ENCODE measurements at regions of chr20 and their contacts with region 1.

Region 1: DNA sequence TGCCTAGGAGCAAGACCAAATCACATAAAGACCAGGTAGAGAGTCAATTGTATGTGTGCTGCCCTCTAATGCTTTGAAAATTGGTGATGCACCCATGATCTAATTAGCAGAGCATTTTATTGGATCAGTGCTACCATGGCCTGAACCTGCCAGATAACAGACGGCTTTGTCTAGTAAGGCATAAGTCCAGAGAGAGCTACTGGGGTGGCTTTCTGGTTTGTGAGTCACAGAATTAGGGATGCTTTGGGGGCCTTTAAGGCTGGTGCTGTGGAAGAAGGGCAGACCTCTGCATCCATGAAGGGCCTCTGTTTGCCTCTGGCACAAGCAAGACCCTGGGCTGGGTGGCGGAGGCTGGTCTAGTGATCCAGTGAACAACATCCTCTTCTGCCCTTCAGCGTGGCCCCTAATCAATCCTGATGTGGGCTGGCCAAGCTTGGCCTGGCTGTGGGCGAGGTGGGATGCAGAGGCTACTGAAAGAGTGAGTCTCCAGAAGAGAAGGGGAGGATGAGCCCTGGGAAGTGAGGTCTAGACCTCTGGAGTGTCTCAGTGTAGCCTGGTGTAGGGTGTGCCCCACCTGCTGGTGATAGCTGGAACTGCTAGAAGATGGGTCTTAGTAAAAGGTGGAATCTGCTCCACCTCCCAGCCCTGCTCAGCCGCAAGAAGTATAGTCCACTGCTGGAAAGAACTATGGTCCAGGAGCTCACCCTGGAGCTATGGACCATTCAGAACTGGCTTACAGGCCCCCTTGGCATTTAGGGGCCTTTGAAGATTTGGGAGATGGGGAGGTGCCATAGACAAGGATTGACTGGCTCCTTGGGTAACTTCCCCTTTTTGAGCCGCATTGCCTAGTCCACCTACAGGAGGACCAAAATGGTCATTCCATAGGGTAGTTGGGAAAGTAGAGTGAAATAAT is 36.7 kb upstream of the AAR2 start:
- DNase-seq: peak; percentile 83
- ATAC-seq: peak; percentile 90
- H3K4me3 ChIP-seq: no peak overlapping the region
- H3K27ac ChIP-seq: no peak overlapping the region
- H3K4me1 ChIP-seq: no peaks in the 10 kb centered on the region
- H3K27me3 ChIP-seq: no peaks in the 10 kb centered on the region
- CTCF ChIP-seq: peak; percentile 99
- EP300 ChIP-seq: no peak
- POLR2A ChIP-seq: no peak
- RAD21 ChIP-seq: peak; percentile 98

Region 2: DNA sequence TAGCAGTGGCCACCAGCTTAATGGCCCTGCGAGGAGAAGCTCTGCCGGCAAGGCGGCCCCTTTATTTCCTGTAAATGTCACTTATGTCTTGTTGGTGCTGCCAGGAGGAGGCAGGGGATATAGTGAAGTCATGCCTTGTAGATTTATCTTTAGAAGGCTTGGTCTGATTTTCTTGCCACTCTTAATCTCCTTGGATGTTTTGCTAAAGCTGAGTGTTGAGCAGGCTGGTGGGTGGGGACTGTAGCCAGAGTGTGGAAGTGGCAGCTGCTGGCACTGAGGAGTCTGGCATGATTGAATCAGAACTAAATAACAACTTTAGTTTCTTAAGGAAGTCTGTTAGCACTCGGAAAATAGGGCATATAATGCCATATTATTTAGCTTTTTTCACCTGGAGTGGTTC is 349.9 kb before region 1 on chr20:
- CTCF ChIA-PET with region 1: no interaction called
- POLR2A ChIA-PET with region 1: no interaction called
- in situ Hi-C with region 1: no loop called
- intact Hi-C with region 1: no loop called
- DNase-seq: no peak
- ATAC-seq: no peak
- H3K4me3 ChIP-seq: no peak overlapping the region
- H3K27ac ChIP-seq: no peak overlapping the region
- H3K4me1 ChIP-seq: peaks cover 6% of the 10 kb centered on the region
- H3K27me3 ChIP-seq: no peaks in the 10 kb centered on the region
- CTCF ChIP-seq: no peak
- EP300 ChIP-seq: no peak
- POLR2A ChIP-seq: no peak
- RAD21 ChIP-seq: no peak

Region 3: GRCh38 chr20:36153736-36154699 is 45.6 kb before region 1 on chr20:
- CTCF ChIA-PET with region 1: interaction called, 83 read pairs
- POLR2A ChIA-PET with region 1: interaction called, 4 read pairs
- in situ Hi-C with region 1: loop called (anchors 5 kb)
- intact Hi-C with region 1: loop called (anchors 1 kb)
- DNase-seq: peak; percentile 74
- ATAC-seq: peak; percentile 79
- H3K4me3 ChIP-seq: peak overlapping the region; percentile 85 to 92 (median 88)
- H3K27ac ChIP-seq: peak overlapping the region; percentile 28
- H3K4me1 ChIP-seq: peaks cover 89% of the 10 kb centered on the region
- H3K27me3 ChIP-seq: no peaks in the 10 kb centered on the region; a peak in 1 of 5 replicates
- CTCF ChIP-seq: peak; percentile 26; the same call in 1 of the 2 replicates
- EP300 ChIP-seq: no peak; a peak in 1 of 4 replicates
- POLR2A ChIP-seq: peak in 1 of 2 experiments; percentile 67; a peak in 1 of 4 replicates
- RAD21 ChIP-seq: no peak

Region 4: DNA sequence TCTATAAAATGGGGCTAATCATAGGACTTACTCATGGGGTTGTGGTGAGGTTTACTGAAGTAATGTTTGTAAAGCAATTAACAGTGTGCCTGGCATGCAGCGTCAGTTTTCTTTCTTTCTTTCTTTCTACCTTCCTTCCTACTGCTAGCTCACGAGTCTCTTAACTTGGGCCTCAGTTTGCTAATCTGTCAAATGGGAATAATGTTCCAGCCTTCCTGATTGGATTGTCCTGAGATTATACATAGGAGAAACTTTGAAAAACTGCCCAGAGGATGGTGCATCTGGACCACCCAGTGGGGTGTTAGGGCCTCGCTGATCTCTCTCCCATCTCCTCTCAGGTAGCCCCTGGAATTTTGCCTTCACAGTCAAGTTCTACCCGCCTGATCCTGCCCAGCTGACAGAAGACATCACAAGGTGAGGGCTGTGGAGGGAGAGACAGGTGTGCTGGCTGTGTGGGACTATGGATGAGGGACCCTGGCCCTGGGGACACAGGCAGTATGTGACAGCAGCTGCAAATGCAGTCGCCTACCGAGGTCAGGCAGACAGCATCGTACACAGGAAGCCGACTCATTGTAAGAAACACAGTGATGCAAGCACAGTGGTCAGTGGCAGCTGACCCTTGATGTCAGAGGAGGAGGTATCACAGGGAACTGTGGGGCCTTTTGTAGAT is 17.5 kb before region 1 on chr20:
- CTCF ChIA-PET with region 1: no interaction called
- POLR2A ChIA-PET with region 1: interaction called, 6 read pairs
- in situ Hi-C with region 1: no loop called
- intact Hi-C with region 1: loop called (anchors 2 kb)
- DNase-seq: peak; percentile 78
- ATAC-seq: peak; percentile 49
- H3K4me3 ChIP-seq: peak overlapping the region in 1 of 3 experiments; percentile 41; a peak in 2 of 6 replicates
- H3K27ac ChIP-seq: peak overlapping the region; percentile 94
- H3K4me1 ChIP-seq: peaks cover 46% of the 10 kb centered on the region
- H3K27me3 ChIP-seq: no peaks in the 10 kb centered on the region
- CTCF ChIP-seq: 0 out of 2 replicates have a peak, but pooled peaks have one; percentile 1
- EP300 ChIP-seq: peak; percentile 34 to 35; a peak in 2 of 4 replicates
- POLR2A ChIP-seq: no peak; a peak in 1 of 4 replicates
- RAD21 ChIP-seq: no peak

Region 5: GRCh38 chr20:36399147-36399968 is 199.8 kb after region 1 on chr20:
- CTCF ChIA-PET with region 1: interaction called, 6 read pairs
- POLR2A ChIA-PET with region 1: no interaction called
- in situ Hi-C with region 1: no loop called
- intact Hi-C with region 1: loop called (anchors 1 kb)
- DNase-seq: peak; percentile 88
- ATAC-seq: peak; percentile 87
- H3K4me3 ChIP-seq: no peak overlapping the region; a peak in 1 of 6 replicates
- H3K27ac ChIP-seq: no peak overlapping the region
- H3K4me1 ChIP-seq: peaks cover 11% of the 10 kb centered on the region
- H3K27me3 ChIP-seq: peaks cover 0 to 27% of the 10 kb centered on the region in 2 experiments; a peak in 2 of 5 replicates
- CTCF ChIP-seq: peak; percentile 83
- EP300 ChIP-seq: peak in 1 of 2 experiments; percentile 61; a peak in 1 of 4 replicates
- POLR2A ChIP-seq: no peak
- RAD21 ChIP-seq: peak; percentile 90

Region 6: GRCh38 chr20:36439040-36439730 is 239.6 kb after region 1 on chr20:
- CTCF ChIA-PET with region 1: interaction called, 27 read pairs
- POLR2A ChIA-PET with region 1: interaction called, 3 read pairs
- in situ Hi-C with region 1: loop called (anchors 5 kb)
- intact Hi-C with region 1: loop called (anchors 1 kb)
- DNase-seq: peak; percentile 59
- ATAC-seq: peak; percentile 70
- H3K4me3 ChIP-seq: no peak overlapping the region
- H3K27ac ChIP-seq: no peak overlapping the region
- H3K4me1 ChIP-seq: no peaks in the 10 kb centered on the region
- H3K27me3 ChIP-seq: peaks cover 3 to 20% of the 10 kb centered on the region in 2 experiments; a peak in 3 of 5 replicates
- CTCF ChIP-seq: peak; percentile 98
- EP300 ChIP-seq: no peak
- POLR2A ChIP-seq: no peak
- RAD21 ChIP-seq: peak; percentile 95

Measured in HepG2 (cell line).